Naive thymus-derived CD4-positive, alpha-beta T cell (primary cell): ENCODE measurements at regions of chr21 and their contacts with region 1.

Region 1: DNA sequence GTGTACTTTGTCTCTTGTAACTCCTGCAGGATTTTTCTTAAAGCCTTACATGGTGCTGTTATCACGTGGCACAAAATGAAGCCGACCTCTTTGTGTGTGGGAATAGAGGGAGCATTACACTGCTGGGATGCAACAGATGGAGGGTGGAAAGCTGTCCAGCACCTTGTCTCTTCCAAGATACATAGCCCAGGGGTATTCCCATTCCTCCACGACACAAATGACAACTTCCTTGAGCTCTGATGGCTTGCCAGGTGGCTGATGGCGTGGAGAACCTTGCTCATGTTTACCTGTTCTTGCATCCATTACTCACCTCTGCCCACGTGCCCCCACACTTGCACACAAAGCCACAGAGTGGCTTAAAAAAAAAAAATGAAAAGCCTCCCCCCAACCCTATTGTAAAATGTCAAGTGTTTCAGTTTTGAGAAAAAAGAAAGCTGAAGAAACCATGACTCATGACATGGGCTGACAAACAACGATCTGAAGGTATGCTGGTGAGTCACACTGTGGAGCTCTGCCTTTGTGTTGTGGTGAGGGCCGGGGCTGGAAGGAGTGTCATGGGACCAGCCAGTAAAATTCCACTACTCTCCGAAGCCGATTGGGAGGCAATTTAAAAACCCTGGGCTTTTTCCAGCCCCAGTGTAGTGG is 32.0 kb upstream of the ATP5PO start:
- DNase-seq: peak; percentile 47 to 95 (median 84)
- ATAC-seq: peak; percentile 76
- H3K4me3 ChIP-seq: peak overlapping the region; percentile 38
- H3K4me3 Mint-ChIP-seq: peak overlapping the region; percentile 71 to 87 (median 78)
- H3K27ac ChIP-seq: peak overlapping the region; percentile 93
- H3K27ac Mint-ChIP-seq: peak overlapping the region; percentile 98 to 100 (median 98)
- H3K4me1 ChIP-seq: peaks cover 56 to 64% of the 10 kb centered on the region in 2 donors
- H3K4me1 Mint-ChIP-seq: peaks cover 53 to 85% (median 77%) of the 10 kb centered on the region in 7 donors
- H3K27me3 ChIP-seq: no peaks in the 10 kb centered on the region
- H3K27me3 Mint-ChIP-seq: peaks cover 0 to 6% (median 0%) of the 10 kb centered on the region in 5 donors

Region 2: GRCh38 chr21:33931799-33932390 is 15.7 kb before region 1 on chr21:
- CTCF ChIA-PET with region 1: interaction called, 44 read pairs
- POLR2A ChIA-PET with region 1: interaction called, 502 read pairs
- intact Hi-C with region 1: loop called (anchors 1 kb)
- DNase-seq: no peak
- ATAC-seq: peak; percentile 40
- H3K4me3 ChIP-seq: peak overlapping the region; percentile 77
- H3K4me3 Mint-ChIP-seq: peak overlapping the region; percentile 94 to 100 (median 98)
- H3K27ac ChIP-seq: peak overlapping the region; percentile 94
- H3K27ac Mint-ChIP-seq: peak overlapping the region; percentile 97 to 100 (median 99)
- H3K4me1 ChIP-seq: peaks cover 30 to 48% of the 10 kb centered on the region in 2 donors
- H3K4me1 Mint-ChIP-seq: peaks cover 18 to 59% (median 44%) of the 10 kb centered on the region in 7 donors
- H3K27me3 ChIP-seq: no peaks in the 10 kb centered on the region
- H3K27me3 Mint-ChIP-seq: no peaks in the 10 kb centered on the region

Region 3: GRCh38 chr21:33976082-33977016 is 28.8 kb after region 1 on chr21:
- CTCF ChIA-PET with region 1: interaction called, 5 read pairs
- POLR2A ChIA-PET with region 1: interaction called, 12 read pairs
- intact Hi-C with region 1: loop called (anchors 1 kb)
- DNase-seq: peak in 8 of 9 donors; percentile 23 to 62 (median 32)
- ATAC-seq: peak; percentile 62
- H3K4me3 ChIP-seq: peak overlapping the region; percentile 18
- H3K4me3 Mint-ChIP-seq: peak overlapping the region; percentile 43 to 78 (median 72)
- H3K27ac ChIP-seq: peak overlapping the region; percentile 64
- H3K27ac Mint-ChIP-seq: peak overlapping the region; percentile 79 to 99 (median 86)
- H3K4me1 ChIP-seq: peaks cover 28 to 32% of the 10 kb centered on the region in 2 donors
- H3K4me1 Mint-ChIP-seq: peaks cover 36 to 73% (median 53%) of the 10 kb centered on the region in 7 donors
- H3K27me3 ChIP-seq: no peaks in the 10 kb centered on the region
- H3K27me3 Mint-ChIP-seq: no peaks in the 10 kb centered on the region

Region 4: DNA sequence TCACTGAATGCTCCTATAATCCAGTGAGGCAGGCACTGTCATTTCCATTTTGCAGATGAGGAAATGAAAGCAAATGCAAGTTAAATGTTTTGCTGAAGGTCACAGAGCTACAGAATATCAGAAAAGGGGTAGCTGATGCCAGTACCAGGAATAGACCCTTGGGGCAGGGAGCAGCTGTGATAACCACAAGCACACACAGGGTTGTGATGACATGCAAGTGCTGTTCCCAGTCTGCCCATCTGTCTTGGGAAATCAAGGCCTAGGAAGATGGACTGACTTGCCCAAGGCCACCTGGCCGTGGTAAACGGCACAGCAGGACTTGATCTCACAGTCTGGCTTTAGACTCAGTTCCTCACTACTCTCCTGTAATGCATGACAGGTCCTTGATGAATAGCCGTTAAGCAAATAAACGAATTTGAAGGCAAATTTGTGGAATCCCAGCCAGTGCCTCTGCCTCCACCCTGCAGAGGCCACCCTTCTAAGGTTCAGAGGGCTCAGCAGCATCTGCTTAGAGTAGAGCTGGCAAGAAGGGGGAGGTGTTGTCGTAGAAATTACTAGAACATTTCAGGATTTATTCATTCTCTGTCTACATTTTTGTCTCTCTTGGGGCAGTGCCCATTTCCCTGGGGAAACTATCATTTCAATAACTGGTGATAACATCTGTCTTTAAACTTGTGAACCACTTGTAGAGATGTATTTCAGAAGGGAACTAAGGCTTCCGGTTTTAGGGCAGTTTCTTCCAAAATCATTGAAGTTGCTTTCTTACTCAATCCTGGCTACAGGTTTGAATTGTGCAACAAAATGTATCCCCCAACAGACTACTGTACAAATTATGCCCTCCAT is 72.7 kb after region 1 on chr21:
- CTCF ChIA-PET with region 1: no interaction called
- POLR2A ChIA-PET with region 1: interaction called, 4 read pairs
- intact Hi-C with region 1: loop called in 1 of 2 experiments (anchors 5 kb)
- DNase-seq: no peak
- ATAC-seq: peak; percentile 42
- H3K4me3 ChIP-seq: no peak overlapping the region
- H3K4me3 Mint-ChIP-seq: peak overlapping the region in 3 of 10 donors; percentile 3 to 26 (median 5)
- H3K27ac ChIP-seq: no peak overlapping the region
- H3K27ac Mint-ChIP-seq: peak overlapping the region in 4 of 9 donors; percentile 3 to 37 (median 27)
- H3K4me1 ChIP-seq: peaks cover 15 to 26% of the 10 kb centered on the region in 2 donors
- H3K4me1 Mint-ChIP-seq: peaks cover 15 to 47% (median 21%) of the 10 kb centered on the region in 7 donors
- H3K27me3 ChIP-seq: no peaks in the 10 kb centered on the region
- H3K27me3 Mint-ChIP-seq: no peaks in the 10 kb centered on the region

Region 5: GRCh38 chr21:34129039-34129891 is 181.7 kb after region 1 on chr21:
- CTCF ChIA-PET with region 1: interaction called, 3 read pairs
- POLR2A ChIA-PET with region 1: interaction called, 7 read pairs
- intact Hi-C with region 1: loop called (anchors 1 kb)
- DNase-seq: peak; percentile 9 to 86 (median 78)
- ATAC-seq: peak; percentile 92
- H3K4me3 ChIP-seq: peak overlapping the region; percentile 22
- H3K4me3 Mint-ChIP-seq: peak overlapping the region; percentile 64 to 82 (median 76)
- H3K27ac ChIP-seq: peak overlapping the region; percentile 64
- H3K27ac Mint-ChIP-seq: peak overlapping the region; percentile 72 to 97 (median 90)
- H3K4me1 ChIP-seq: peaks cover 4 to 67% of the 10 kb centered on the region in 2 donors
- H3K4me1 Mint-ChIP-seq: peaks cover 69 to 99% (median 95%) of the 10 kb centered on the region in 7 donors
- H3K27me3 ChIP-seq: no peaks in the 10 kb centered on the region
- H3K27me3 Mint-ChIP-seq: no peaks in the 10 kb centered on the region

Region 6: GRCh38 chr21:34614633-34615486 is 667.3 kb after region 1 on chr21 and contains the start of gene RCAN1:
- CTCF ChIA-PET with region 1: no interaction called
- POLR2A ChIA-PET with region 1: no interaction called
- intact Hi-C with region 1: loop called in 1 of 2 experiments (anchors 1 kb)
- DNase-seq: peak; percentile 70 to 87 (median 85)
- ATAC-seq: peak; percentile 99
- H3K4me3 ChIP-seq: peak within 1 kb of the TSS; percentile 67
- H3K4me3 Mint-ChIP-seq: peak within 1 kb of the TSS; percentile 83 to 96 (median 93)
- H3K27ac ChIP-seq: peak within 1 kb of the TSS; percentile 57
- H3K27ac Mint-ChIP-seq: peak within 1 kb of the TSS; percentile 82 to 95 (median 83)
- H3K4me1 ChIP-seq: peaks cover 4 to 12% of the 10 kb centered on the region in 2 donors
- H3K4me1 Mint-ChIP-seq: peaks cover 15 to 25% (median 20%) of the 10 kb centered on the region in 7 donors
- H3K27me3 ChIP-seq: no peaks in the 10 kb centered on the region
- H3K27me3 Mint-ChIP-seq: peaks cover 0 to 32% (median 0%) of the 10 kb centered on the region in 5 donors
- total RNA-seq, gene RCAN1: 3.0 to 8.1 (median 4.9) TPM